RWPE1 (cell line): ENCODE measurements at regions of chr20 and their contacts with region 1.

Region 1: DNA sequence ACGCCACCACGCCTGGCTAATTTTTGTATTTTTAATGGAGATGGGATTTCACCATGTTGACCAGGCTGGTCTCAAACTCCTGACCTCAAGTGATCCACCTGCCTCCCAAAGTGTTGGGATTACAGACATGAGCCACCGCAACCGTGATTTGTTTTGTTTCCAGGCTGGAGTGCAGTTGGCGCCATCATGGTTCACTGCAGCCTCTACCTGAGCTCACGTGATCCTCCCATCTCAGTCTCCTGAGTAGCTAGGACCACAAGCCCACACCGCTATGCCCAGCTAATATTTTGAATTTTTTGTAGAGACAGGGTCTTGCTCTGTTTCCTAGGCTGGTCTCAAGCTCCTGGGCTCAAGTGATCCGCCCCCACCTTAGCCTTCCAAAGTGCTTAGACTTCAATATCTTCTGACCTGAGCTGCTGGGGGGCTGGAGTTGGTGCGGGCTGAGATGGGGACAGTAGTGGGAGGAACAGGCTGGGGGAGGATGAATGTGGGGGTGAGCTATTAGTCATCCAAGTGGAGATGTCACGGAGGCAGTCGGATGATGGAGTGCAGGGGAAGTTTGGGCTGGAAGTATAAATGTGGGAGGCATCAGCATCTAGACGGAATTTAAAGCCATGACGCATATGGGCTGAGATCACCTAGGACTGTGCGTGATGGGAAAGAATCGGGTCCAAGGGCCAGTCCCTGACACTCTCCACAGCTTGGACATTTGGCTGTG is 23.1 kb upstream of the ZMYND8 start:
- DNase-seq: no peak
- H3K27ac ChIP-seq: peak overlapping the region; percentile 67
- CTCF ChIP-seq: no peak

Region 2: DNA sequence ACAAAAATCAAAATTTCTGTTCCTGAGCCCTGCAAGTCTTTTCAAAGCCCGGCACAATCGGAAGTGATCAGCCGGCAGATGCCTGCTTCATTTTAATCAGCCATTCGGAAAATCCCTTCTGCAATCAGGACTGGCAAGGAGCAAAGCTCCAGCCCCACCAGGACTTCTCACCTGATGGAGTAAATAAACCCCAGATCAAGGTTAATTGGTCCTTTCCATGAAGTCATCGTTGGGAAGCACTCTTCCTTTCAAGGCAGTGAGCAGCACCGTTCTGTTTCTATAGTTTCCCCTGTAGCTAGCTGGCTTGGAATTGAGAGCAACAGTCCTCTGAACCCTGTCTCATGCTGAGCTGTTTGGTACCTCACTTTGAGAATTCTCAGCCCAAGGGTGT is 208.7 kb before region 1 on chr20:
- CTCF ChIA-PET with region 1: interaction called, 10 read pairs
- POLR2A ChIA-PET with region 1: no interaction called
- DNase-seq: no peak
- H3K27ac ChIP-seq: no peak overlapping the region
- CTCF ChIP-seq: no peak

Region 3: DNA sequence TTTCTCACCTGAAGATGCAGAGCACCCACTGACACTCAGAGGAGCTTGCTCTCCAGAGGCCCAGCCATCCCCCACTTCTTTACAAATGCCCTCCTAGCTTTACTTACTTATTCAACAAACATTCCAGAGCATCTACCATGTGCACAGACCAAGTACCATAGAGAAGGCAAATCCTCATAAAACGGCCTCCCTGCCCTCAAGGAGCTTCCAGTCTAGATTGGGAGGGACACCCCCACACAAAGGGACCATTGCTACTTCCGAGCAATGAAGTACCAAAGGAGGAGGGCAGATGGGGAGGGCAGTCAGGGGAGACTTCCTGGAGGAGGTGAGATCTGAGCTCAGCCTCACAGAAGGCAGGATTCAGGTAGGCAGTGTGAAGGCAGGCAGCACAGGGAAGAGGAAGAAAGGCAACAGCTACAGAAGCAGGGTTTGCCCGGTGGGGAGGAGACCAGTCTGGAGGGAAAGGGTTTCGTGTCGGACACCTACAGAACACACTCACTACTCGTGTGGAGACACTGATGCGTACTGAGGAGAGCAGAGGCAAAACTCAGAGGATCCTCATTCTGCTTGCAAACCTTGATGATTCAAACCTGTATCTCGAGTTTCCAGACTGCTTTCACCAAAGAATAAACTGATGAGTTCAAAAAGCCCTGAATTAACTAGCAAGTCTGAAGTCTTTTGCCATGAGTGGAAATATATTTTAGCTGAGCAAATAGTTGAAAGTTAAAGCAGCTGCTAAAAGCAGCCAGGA is 131.0 kb before region 1 on chr20:
- CTCF ChIA-PET with region 1: interaction called, 10 read pairs
- POLR2A ChIA-PET with region 1: no interaction called
- DNase-seq: no peak
- H3K27ac ChIP-seq: peak overlapping the region; percentile 18
- CTCF ChIP-seq: no peak

Region 4: DNA sequence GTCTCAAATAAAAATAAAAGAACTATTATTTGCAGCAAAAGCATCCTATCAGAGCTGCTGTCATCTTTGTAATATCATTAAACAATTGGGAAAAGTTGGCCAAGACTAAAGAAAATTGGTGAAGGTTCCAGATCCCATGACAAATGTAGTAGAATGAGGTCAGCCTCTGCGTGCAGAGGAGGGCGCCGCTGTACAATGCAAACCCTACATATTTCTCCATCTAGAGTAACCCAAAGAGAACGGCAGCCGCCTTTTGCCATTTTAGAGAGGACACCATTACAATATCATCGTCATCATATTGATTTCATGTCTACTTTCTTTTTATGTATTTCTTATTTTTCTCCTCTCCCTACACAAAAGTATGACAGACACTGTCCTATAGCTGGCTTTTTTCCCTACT is 82.6 kb before region 1 on chr20:
- CTCF ChIA-PET with region 1: interaction called, 27 read pairs
- POLR2A ChIA-PET with region 1: no interaction called
- DNase-seq: no peak
- H3K27ac ChIP-seq: peak overlapping the region; percentile 31; the same call in 1 of the 2 replicates
- CTCF ChIP-seq: no peak

Region 5: GRCh38 chr20:47330933-47331864 is 48.4 kb before region 1 on chr20:
- CTCF ChIA-PET with region 1: interaction called, 25 read pairs
- POLR2A ChIA-PET with region 1: no interaction called
- DNase-seq: peak; percentile 94
- H3K27ac ChIP-seq: peak overlapping the region; percentile 100
- CTCF ChIP-seq: no peak

Region 6: DNA sequence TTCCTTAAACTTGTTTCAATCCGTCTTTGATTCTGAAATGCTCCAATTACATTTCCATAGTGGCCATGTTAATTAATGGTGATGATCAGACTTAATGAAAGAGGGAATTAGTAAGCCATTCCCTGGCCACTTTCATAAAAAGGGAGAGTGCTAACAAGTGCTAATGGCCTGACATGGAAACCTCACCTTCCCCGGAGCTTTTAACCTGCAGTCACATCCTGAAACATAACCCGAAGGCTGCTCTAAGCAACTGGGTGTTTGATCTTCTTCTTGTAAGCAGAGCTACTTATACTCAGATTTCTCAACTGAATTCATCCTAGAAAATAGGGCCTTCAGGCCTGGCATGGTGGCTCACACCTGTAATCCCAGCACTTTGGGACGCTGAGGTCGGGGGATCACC is 44.0 kb after region 1 on chr20:
- CTCF ChIA-PET with region 1: no interaction called
- POLR2A ChIA-PET with region 1: no interaction called
- DNase-seq: no peak
- H3K27ac ChIP-seq: no peak overlapping the region
- CTCF ChIP-seq: no peak

Region 7: GRCh38 chr20:47464380-47465101 is 84.9 kb after region 1 on chr20:
- CTCF ChIA-PET with region 1: interaction called, 10 read pairs
- POLR2A ChIA-PET with region 1: no interaction called
- DNase-seq: peak; percentile 99
- H3K27ac ChIP-seq: peak overlapping the region; percentile 98
- CTCF ChIP-seq: peak; percentile 84

Region 8: GRCh38 chr20:47524015-47524784 is 144.6 kb after region 1 on chr20:
- CTCF ChIA-PET with region 1: no interaction called
- POLR2A ChIA-PET with region 1: no interaction called
- DNase-seq: no peak
- H3K27ac ChIP-seq: no peak overlapping the region
- CTCF ChIP-seq: no peak